ENCODE measurements at regions of chr6 and their contacts with region 1.

Region 1: DNA sequence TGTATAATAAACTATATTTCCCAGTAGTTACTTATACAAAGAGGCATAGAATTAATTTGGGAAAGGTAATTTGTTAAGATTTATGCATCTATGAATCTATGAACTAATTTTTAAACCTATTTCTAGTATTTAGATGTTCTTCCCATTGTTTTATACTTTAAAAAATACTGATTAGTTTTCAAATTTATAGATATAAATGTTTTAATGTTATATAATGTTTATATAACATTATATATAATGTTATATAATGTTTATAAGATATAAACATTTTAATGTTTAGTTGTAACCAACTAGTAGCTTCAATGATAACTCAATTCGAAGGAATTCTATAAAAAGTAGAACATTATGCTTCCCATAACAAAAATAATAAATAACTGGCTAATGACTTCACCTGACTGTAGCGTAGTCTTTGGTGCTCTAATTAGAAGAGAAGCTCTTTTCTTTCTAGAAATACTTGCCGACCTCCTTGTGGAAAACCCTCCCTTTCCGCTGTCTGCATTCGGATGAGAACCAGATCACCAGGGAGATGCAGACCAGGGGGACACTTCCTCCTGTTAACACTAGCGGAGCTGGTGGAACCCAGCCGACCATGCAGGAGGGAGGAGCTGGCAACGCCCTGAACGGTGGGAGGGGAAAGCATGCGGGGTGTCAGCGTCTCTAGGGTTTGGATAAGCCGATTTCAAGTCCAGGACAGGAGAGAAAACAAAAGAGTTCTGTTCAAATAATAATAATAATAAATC is 158.4 kb downstream of the OR2B2 start:
- DNase-seq: peak in 8 of 9 donors; percentile 38 to 69 (median 45)
- ATAC-seq: peak; percentile 22
- H3K4me3 ChIP-seq: peak overlapping the region; percentile 80
- H3K4me3 Mint-ChIP-seq: peak overlapping the region; percentile 81 to 99 (median 94)
- H3K27ac ChIP-seq: peak overlapping the region; percentile 96
- H3K27ac Mint-ChIP-seq: peak overlapping the region; percentile 84 to 100 (median 97)
- H3K4me1 ChIP-seq: peaks cover 6 to 20% of the 10 kb centered on the region in 2 donors
- H3K4me1 Mint-ChIP-seq: peaks cover 17 to 53% (median 39%) of the 10 kb centered on the region in 7 donors
- H3K27me3 ChIP-seq: no peaks in the 10 kb centered on the region
- H3K27me3 Mint-ChIP-seq: peaks cover 0 to 8% (median 0%) of the 10 kb centered on the region in 5 donors

Region 2: DNA sequence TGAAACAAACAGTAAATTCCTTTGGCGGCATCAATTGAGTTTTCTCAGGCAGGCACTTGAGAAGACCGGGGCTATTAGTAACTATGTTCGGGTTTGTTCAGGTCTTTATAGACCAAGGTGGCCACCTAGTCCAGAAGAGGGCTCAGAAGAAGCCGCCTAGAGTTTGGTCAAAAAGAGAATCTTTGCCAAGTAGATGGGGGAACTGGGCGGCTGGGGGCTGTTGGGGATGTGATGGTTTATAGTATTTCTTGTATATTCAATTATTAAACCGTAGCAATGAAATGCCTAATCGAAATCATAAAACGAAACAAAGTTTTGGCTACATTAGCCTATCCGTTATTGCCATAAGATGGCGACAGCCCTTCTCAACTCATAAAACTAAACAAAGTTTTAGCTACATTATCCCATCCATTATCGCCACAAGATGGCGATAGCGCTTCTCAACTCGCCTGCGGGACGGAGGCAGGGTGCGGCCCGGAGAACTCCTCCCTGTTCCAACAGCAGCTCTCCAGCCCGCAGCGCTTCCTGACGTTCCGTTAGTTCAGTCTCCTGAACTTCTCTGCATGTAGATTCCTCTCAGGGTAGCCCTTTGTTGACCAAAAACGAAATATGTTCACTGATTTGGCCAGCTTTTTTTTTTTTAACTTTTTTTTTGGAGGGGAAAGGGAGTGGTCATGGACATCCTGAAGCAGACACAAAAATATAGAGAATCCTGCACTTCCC is 626.9 kb before region 1 on chr6:
- CTCF ChIA-PET with region 1: interaction called, 4 read pairs
- POLR2A ChIA-PET with region 1: interaction called, 5 read pairs
- intact Hi-C with region 1: loop called (anchors 1 kb)
- DNase-seq: peak; percentile 46 to 82 (median 77)
- ATAC-seq: peak; percentile 89
- H3K4me3 ChIP-seq: peak overlapping the region; percentile 33
- H3K4me3 Mint-ChIP-seq: peak overlapping the region; percentile 35 to 90 (median 77)
- H3K27ac ChIP-seq: no peak overlapping the region
- H3K27ac Mint-ChIP-seq: peak overlapping the region; percentile 41 to 93 (median 82)
- H3K4me1 ChIP-seq: peaks cover 4 to 6% of the 10 kb centered on the region in 2 donors
- H3K4me1 Mint-ChIP-seq: peaks cover 6 to 51% (median 15%) of the 10 kb centered on the region in 7 donors
- H3K27me3 ChIP-seq: no peaks in the 10 kb centered on the region
- H3K27me3 Mint-ChIP-seq: no peaks in the 10 kb centered on the region

Region 3: DNA sequence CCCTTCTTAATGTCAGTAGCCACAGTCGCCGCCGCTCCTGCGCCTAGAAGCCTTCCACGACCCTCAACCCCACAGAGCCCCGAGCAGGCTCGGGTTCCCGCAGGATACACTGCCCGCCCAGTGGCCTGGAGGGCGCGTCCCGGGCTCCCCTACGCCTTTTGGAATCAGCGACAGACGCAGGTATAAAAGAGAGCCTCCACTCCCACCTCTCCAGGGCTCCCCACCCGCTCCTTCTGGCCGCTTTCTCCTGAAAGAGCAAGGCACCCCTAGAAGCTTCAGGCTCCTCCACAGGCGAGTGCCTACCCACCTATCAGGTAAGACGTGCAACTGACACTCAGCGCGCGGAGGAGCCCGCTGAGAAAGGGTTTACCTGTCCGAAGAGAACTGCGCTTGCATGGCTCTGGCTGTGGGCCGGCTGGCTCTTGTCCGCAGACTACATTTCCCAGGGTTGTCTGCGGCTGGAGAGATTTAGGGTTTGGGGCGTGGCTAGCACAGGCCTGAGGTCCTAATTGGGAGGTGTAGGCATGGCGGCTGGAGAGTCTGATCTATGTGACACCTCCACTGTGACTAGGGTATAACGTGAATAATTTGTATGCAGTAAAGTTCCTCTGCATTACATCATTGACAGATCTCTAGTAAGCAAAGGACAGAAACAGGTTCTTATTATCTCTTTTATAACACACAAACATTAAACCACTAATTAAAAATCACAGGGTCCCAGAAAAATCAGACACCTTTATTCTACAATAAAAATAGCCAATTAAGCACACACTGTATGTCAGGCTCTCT is 378.8 kb before region 1 on chr6:
- CTCF ChIA-PET with region 1: no interaction called
- POLR2A ChIA-PET with region 1: no interaction called
- intact Hi-C with region 1: loop called in 1 of 2 experiments (anchors 1 kb)
- DNase-seq: peak; percentile 31 to 68 (median 62)
- ATAC-seq: peak; percentile 98
- H3K4me3 ChIP-seq: peak overlapping the region; percentile 81
- H3K4me3 Mint-ChIP-seq: peak overlapping the region; percentile 68 to 94 (median 92)
- H3K27ac ChIP-seq: peak overlapping the region; percentile 68
- H3K27ac Mint-ChIP-seq: peak overlapping the region in 8 of 9 donors; percentile 81 to 93 (median 87)
- H3K4me1 ChIP-seq: peaks cover 13 to 17% of the 10 kb centered on the region in 2 donors
- H3K4me1 Mint-ChIP-seq: peaks cover 16 to 35% (median 28%) of the 10 kb centered on the region in 7 donors
- H3K27me3 ChIP-seq: no peaks in the 10 kb centered on the region
- H3K27me3 Mint-ChIP-seq: peaks cover 0 to 6% (median under 1%) of the 10 kb centered on the region in 5 donors

Region 4: DNA sequence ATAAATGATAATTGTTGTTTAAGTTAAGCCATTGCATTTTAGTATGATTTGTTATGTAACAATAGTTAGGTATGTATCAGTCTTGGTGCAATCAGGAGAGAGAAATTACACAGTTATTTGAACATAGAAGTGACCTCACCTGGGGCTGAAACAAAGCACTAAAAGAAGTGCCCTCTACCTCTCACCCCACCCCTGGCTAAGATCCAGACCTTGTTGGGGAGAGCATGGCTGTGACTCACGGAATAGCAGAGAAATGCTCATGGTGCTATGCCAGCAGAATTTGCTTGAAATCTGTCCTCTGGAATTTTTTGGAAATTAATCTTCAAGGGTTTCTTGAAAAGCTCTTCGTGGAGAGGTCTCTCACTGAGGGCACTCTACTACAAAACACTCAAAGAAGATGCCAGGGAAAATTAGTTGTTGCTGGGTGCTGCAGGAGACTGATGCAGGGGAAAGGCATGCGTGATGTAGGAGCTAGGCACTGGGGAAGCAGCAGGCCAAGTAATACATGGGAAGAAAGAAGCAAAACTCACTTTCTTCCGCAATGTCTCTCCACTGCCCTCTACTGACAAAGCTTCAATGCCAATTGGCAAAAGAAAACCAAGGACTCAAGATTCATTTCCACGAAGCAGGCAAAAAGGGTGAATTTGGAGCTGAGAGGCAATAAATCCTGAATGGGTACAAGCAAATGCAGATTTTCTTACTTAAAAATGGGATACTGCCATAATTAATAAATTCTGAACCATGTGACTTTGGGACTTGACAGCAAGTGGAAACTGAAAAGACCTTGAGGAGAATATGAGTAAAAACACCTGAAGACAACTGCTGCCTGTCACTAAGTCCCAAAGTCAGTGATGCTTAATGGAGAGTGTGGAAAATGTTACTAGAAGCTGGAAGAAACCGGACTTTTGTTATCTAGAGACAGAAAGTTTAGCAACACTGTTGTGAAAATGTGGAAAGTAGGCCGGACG is 144.6 kb before region 1 on chr6:
- CTCF ChIA-PET with region 1: no interaction called
- POLR2A ChIA-PET with region 1: no interaction called
- intact Hi-C with region 1: loop called in 1 of 2 experiments (anchors 1 kb)
- DNase-seq: peak in 2 of 9 donors; percentile 19 to 33
- ATAC-seq: no peak
- H3K4me3 ChIP-seq: no peak overlapping the region
- H3K4me3 Mint-ChIP-seq: no peak overlapping the region
- H3K27ac ChIP-seq: no peak overlapping the region
- H3K27ac Mint-ChIP-seq: no peak overlapping the region
- H3K4me1 ChIP-seq: no peaks in the 10 kb centered on the region
- H3K4me1 Mint-ChIP-seq: peaks cover 0 to 17% (median 9%) of the 10 kb centered on the region in 7 donors
- H3K27me3 ChIP-seq: peaks cover 7 to 11% of the 10 kb centered on the region in 2 donors
- H3K27me3 Mint-ChIP-seq: peaks cover 44 to 73% (median 60%) of the 10 kb centered on the region in 5 donors

Region 5: DNA sequence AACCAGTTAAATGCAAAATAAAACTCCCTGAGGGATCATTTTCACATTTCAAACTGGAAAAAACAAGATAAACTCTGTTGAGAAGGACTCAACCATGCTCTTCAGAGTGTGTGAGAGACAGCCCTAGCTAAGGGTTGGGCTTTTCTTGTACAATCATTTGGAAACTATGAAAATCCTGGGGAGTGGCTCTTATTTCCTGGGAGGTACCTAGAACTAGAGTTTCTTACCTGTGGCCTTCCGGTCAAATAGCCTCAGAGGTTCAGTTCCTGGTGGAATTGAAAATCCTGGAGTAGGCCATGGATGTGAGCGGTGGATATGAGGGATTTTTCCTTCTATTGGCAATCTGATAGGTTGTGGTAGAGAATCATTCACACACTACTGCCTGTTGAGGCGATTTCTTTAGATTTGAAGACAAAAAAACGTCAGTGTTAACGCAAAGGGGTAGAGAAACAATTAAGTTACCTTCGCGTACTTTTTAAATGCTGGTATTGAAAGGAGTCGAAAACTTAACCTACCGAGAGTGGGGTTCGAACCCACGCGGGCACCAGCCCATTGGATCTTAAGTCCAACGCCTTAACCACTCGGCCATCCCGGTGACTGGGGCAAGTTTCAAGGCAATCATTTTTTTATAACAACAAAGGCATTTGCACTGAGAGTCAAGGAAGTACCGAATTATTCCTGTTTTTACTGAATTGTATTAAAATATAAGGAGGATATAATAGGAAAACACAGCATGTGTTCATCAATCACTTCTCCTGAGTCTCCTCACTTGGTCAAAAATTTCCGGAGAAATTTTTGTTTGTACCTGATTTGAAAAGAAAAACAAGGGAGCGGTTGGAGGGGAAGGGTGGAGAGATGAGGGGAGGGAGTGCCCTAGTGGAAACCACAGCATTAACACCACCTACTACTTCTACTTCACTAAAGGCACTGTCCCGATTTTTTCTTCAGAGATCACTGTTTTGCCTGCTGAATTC is 32.9 kb before region 1 on chr6:
- CTCF ChIA-PET with region 1: no interaction called
- POLR2A ChIA-PET with region 1: no interaction called
- intact Hi-C with region 1: no loop called
- DNase-seq: peak in 1 of 9 donors; percentile 27
- ATAC-seq: no peak
- H3K4me3 ChIP-seq: no peak overlapping the region
- H3K4me3 Mint-ChIP-seq: no peak overlapping the region
- H3K27ac ChIP-seq: no peak overlapping the region
- H3K27ac Mint-ChIP-seq: no peak overlapping the region
- H3K4me1 ChIP-seq: no peaks in the 10 kb centered on the region
- H3K4me1 Mint-ChIP-seq: peaks cover 0 to 27% (median 0%) of the 10 kb centered on the region in 7 donors
- H3K27me3 ChIP-seq: peaks cover 0 to 3% of the 10 kb centered on the region in 2 donors
- H3K27me3 Mint-ChIP-seq: peaks cover 25 to 57% (median 38%) of the 10 kb centered on the region in 5 donors

Region 6: GRCh38 chr6:27838058-27838944 is 84.5 kb after region 1 on chr6:
- CTCF ChIA-PET with region 1: no interaction called
- POLR2A ChIA-PET with region 1: interaction called, 20 read pairs
- intact Hi-C with region 1: loop called in 1 of 2 experiments (anchors 1 kb)
- DNase-seq: peak; percentile 65 to 96 (median 93)
- ATAC-seq: peak; percentile 86
- H3K4me3 ChIP-seq: peak overlapping the region; percentile 87
- H3K4me3 Mint-ChIP-seq: no peak overlapping the region
- H3K27ac ChIP-seq: peak overlapping the region; percentile 93
- H3K27ac Mint-ChIP-seq: no peak overlapping the region
- H3K4me1 ChIP-seq: peaks cover 22 to 34% of the 10 kb centered on the region in 2 donors
- H3K4me1 Mint-ChIP-seq: peaks cover 7 to 39% (median 29%) of the 10 kb centered on the region in 7 donors
- H3K27me3 ChIP-seq: no peaks in the 10 kb centered on the region
- H3K27me3 Mint-ChIP-seq: peaks cover 0 to 14% (median 7%) of the 10 kb centered on the region in 5 donors

Region 7: GRCh38 chr6:28443112-28443773 is 689.4 kb after region 1 on chr6 and contains the start of gene ZSCAN23:
- CTCF ChIA-PET with region 1: no interaction called
- POLR2A ChIA-PET with region 1: no interaction called
- intact Hi-C with region 1: loop called in 1 of 2 experiments (anchors 5 kb)
- DNase-seq: peak; percentile 59 to 93 (median 88)
- ATAC-seq: peak; percentile 96
- H3K4me3 ChIP-seq: peak within 1 kb of the TSS; percentile 76
- H3K4me3 Mint-ChIP-seq: peak within 1 kb of the TSS; percentile 86 to 98 (median 96)
- H3K27ac ChIP-seq: peak within 1 kb of the TSS; percentile 60
- H3K27ac Mint-ChIP-seq: peak within 1 kb of the TSS; percentile 76 to 97 (median 93)
- H3K4me1 ChIP-seq: peaks cover 13 to 16% of the 10 kb centered on the region in 2 donors
- H3K4me1 Mint-ChIP-seq: peaks cover 15 to 38% (median 32%) of the 10 kb centered on the region in 7 donors
- H3K27me3 ChIP-seq: peaks cover 0 to 6% of the 10 kb centered on the region in 2 donors
- H3K27me3 Mint-ChIP-seq: peaks cover 9 to 36% (median 30%) of the 10 kb centered on the region in 5 donors
- total RNA-seq, gene ZSCAN23: 1.4 to 3.4 (median 2.4) TPM